AG04450 (cell line): ENCODE measurements at regions of chr3 and their contacts with region 1.

Region 1: GRCh38 chr3:107235928-107236315 is 141.3 kb upstream of the CCDC54 start:
- DNase-seq: peak; percentile 74
- H3K4me3 ChIP-seq: peak overlapping the region; percentile 52
- H3K27ac ChIP-seq: no peak overlapping the region
- H3K27me3 ChIP-seq: no peaks in the 10 kb centered on the region
- CTCF ChIP-seq: peak; percentile 80

Region 2: DNA sequence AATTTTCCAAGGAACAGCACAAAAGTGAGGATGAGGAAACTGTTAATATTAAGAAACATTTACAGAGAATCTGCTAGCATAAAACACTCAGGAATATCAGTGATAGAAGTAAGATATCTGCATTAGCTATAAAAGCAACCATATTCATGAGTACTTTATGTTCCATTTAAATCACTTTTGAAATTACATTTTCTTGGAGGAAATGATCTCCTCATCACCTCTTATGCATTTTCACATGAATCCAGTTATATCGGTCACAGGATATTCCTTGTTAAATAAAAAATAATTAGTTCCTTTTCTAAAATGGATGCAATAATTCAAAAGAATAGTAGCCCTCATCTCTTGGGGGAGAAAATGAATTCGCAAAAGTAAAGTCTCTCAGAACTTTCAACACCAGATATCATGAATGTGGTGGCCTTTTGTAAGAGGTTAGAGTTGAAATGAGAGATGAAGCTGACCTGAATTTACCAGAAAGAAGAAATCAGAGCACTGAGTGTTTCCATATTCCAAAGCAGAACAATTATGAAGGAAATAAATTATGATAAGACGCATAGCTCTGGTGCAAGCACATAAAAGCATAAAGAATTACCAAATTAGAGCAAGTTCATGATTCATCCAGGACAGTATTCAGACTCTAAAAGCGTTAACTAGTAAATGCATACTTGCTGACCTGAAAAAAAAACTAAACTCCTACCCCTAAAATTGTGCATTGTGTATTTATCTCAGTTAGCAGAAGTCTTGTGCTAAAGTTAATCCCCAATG is 180.6 kb before region 1 on chr3:
- CTCF ChIA-PET with region 1: no interaction called
- POLR2A ChIA-PET with region 1: no interaction called
- DNase-seq: no peak
- H3K4me3 ChIP-seq: no peak overlapping the region
- H3K27ac ChIP-seq: no peak overlapping the region
- H3K27me3 ChIP-seq: no peaks in the 10 kb centered on the region
- CTCF ChIP-seq: no peak

Region 3: DNA sequence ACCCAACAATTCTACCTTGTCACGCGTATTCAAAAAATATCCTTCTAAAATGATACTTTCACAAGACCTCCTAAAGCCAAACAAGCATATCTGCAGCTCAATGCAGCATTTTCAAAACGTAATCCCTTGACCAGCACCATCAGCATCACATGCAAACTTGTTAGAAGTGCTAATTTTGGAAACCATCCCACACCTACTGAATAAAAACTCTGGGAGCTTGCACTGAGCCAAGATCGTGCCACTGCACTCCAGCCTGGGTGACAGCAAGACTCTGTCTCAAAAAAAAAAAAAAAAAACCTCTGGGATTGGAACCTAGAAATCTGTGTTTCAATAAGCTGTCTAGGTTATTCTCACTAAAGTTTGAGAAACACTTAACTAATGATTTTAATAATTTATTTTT is 81.9 kb before region 1 on chr3:
- CTCF ChIA-PET with region 1: no interaction called
- POLR2A ChIA-PET with region 1: no interaction called
- DNase-seq: no peak
- H3K4me3 ChIP-seq: no peak overlapping the region
- H3K27ac ChIP-seq: no peak overlapping the region
- H3K27me3 ChIP-seq: peaks cover 2% of the 10 kb centered on the region
- CTCF ChIP-seq: no peak

Region 4: GRCh38 chr3:107222907-107223306 is 13.0 kb before region 1 on chr3:
- CTCF ChIA-PET with region 1: interaction called, 16 read pairs
- POLR2A ChIA-PET with region 1: no interaction called
- DNase-seq: no peak
- H3K4me3 ChIP-seq: no peak overlapping the region
- H3K27ac ChIP-seq: no peak overlapping the region
- H3K27me3 ChIP-seq: no peaks in the 10 kb centered on the region
- CTCF ChIP-seq: no peak

Region 5: GRCh38 chr3:107392549-107393165 is 156.7 kb after region 1 on chr3:
- CTCF ChIA-PET with region 1: no interaction called
- POLR2A ChIA-PET with region 1: no interaction called
- DNase-seq: peak; percentile 16
- H3K4me3 ChIP-seq: no peak overlapping the region
- H3K27ac ChIP-seq: no peak overlapping the region
- H3K27me3 ChIP-seq: no peaks in the 10 kb centered on the region
- CTCF ChIP-seq: no peak

Region 6: DNA sequence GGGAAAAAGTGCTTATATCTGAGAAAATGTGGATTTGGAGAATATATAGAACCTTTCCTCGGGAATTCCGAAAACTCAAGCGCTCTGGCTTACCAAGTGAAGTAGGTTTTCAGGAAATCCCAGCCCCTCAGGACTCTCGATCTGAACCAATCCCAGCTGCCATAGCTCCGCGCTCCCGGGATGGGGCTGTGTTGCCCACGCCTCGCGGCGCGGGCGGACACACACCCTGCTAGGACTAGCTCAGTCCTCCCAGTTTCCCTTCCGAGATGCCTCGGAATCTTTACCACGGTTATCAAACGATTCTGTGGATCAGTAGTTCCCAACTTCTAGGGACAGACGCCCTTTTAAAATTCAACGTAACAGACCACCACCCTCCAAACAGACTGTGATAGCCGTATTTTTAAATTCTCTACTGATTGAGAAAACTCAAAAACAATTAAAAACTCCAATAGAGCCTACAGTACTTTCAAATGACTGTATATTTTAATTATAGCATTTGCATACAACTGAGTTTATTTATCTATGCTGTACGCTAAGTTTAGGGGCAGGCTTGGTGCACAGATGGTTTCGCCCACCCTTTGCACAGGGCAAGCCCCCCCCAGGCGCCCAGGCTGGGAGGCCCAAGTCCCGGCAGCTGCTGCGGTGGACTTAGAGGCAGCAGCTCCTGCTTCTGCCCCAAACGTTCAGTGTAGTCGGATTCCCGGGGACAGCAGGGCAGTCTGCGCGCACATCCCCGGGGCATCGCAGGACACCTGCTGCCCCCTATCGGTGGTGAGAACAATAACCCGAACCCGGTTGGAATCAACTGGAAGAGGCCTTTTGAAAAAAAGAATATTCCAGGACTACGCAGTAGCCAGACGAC is 193.6 kb after region 1 on chr3:
- CTCF ChIA-PET with region 1: interaction called, 60 read pairs
- POLR2A ChIA-PET with region 1: interaction called, 4 read pairs
- DNase-seq: peak; percentile 70
- H3K4me3 ChIP-seq: peak overlapping the region; percentile 61
- H3K27ac ChIP-seq: no peak overlapping the region
- H3K27me3 ChIP-seq: no peaks in the 10 kb centered on the region
- CTCF ChIP-seq: peak; percentile 91

Region 7: GRCh38 chr3:107676469-107677309 is 440.8 kb after region 1 on chr3:
- CTCF ChIA-PET with region 1: interaction called, 21 read pairs
- POLR2A ChIA-PET with region 1: no interaction called
- DNase-seq: no peak
- H3K4me3 ChIP-seq: no peak overlapping the region
- H3K27ac ChIP-seq: no peak overlapping the region
- H3K27me3 ChIP-seq: no peaks in the 10 kb centered on the region
- CTCF ChIP-seq: peak; percentile 56

Region 8: DNA sequence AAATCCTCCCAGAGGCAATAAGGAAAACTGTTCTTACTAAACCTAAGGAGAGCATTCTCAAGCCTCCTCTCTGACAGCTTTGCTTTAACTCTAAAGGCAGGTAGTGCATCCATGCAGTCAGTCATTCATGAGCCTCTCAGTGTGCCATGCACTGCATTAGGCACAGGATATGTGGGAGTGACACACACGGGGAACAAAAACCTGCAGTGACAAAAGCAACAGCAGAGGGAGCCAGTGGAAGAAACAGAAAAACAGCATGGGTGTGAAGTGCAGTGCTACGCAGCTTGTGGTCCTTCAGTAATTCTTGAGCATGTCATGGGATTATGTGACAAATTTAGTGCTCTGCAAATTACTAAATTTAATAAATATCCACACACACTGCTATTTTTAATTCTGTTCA is 517.6 kb after region 1 on chr3:
- CTCF ChIA-PET with region 1: interaction called, 12 read pairs
- POLR2A ChIA-PET with region 1: no interaction called
- DNase-seq: no peak
- H3K4me3 ChIP-seq: no peak overlapping the region
- H3K27ac ChIP-seq: no peak overlapping the region
- H3K27me3 ChIP-seq: no peaks in the 10 kb centered on the region
- CTCF ChIP-seq: peak; percentile 55

Region 9: GRCh38 chr3:108406661-108407206 is 1170.8 kb after region 1 on chr3:
- CTCF ChIA-PET with region 1: interaction called, 11 read pairs
- POLR2A ChIA-PET with region 1: no interaction called
- DNase-seq: peak; percentile 16
- H3K4me3 ChIP-seq: no peak overlapping the region
- H3K27ac ChIP-seq: no peak overlapping the region
- H3K27me3 ChIP-seq: no peaks in the 10 kb centered on the region
- CTCF ChIP-seq: peak; percentile 80